Activated naive CD4-positive, alpha-beta T cell treated with anti-CD3 and anti-CD28 coated beads, Interleukin-2, amount 10 ng/mL, durations not matched to agents 7 days and 5 days (primary cell): ENCODE measurements at regions of chr13 and their contacts with region 1.

Region 1: GRCh38 chr13:102596147-102597028 is at the start of gene TPP2:
- DNase-seq: peak; percentile 99
- H3K4me3 Mint-ChIP-seq: peak within 1 kb of the TSS; percentile 97
- H3K27ac Mint-ChIP-seq: peak within 1 kb of the TSS; percentile 100
- H3K4me1 Mint-ChIP-seq: peaks cover 66% of the 10 kb centered on the region
- H3K27me3 Mint-ChIP-seq: no peaks in the 10 kb centered on the region

Region 2: DNA sequence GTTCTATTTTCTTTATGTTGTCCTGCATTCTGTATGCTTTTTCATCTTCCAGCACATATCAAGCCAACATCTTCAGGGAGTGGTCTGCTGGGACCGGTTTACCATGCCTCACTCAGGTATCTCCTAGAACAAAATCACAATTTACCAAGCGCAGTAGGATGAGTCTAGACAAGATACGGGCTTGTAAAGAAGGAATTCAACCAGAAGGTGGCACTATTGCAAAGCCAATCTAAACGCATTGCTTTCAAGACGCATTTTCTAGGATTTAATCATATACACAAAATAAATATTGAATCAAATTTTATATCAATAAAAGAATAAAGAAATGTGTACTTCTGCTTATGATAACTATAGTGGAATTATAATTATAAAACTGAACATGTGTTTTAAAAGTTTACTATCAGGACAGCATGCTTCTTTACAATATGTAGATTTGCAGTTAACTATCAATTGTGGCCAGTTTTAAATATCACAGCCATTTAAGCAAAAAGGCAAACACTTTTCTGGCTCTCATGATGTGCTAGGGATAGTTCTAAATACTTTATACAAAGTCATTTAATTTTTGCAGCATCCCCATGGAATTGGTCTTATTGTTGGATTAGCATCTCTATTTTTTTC is 15.7 kb before region 1 on chr13:
- CTCF ChIA-PET with region 1: interaction called, 11 read pairs
- DNase-seq: peak; percentile 49
- H3K4me3 Mint-ChIP-seq: no peak overlapping the region
- H3K27ac Mint-ChIP-seq: no peak overlapping the region
- H3K4me1 Mint-ChIP-seq: peaks cover 18% of the 10 kb centered on the region
- H3K27me3 Mint-ChIP-seq: peaks cover 10% of the 10 kb centered on the region

Region 3: DNA sequence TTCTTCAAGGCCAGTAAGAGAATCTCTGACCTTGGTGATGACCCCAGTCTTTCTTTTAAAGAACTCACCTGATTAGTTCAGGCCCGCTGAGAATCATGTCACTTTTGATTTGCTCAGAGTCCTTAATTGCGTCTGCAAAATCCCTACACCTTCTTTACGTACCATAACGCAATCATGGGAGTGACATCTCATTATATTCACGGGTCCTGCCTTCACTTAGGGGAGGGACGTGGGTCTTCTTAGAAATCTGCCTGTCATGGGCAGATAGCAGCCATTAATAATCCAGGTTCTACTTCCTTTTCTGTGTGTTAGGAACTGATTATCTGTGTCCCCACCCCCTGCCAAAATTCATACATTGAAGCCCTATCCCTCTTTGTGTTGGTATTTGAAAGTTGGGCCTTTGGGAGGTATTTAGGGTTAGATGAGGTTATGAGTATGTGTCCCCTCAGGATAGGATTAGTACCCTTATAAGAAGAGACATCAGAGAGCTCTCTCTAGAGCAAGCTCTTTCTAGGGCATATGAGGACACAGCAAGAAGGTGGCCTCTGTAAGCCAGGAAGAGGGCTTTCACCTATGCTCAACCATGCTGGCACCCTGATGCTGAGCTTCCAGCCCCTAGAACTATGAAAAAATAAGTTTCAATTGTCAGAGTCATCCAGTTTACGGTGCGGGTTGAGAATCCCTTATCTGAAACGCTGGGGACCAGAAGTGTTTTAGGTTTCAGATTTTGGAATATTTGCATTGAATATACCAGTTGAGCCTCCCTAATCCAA is 10.3 kb after region 1 on chr13:
- CTCF ChIA-PET with region 1: interaction called, 11 read pairs
- DNase-seq: no peak
- H3K4me3 Mint-ChIP-seq: no peak overlapping the region
- H3K27ac Mint-ChIP-seq: peak overlapping the region; percentile 43
- H3K4me1 Mint-ChIP-seq: peaks cover 66% of the 10 kb centered on the region
- H3K27me3 Mint-ChIP-seq: no peaks in the 10 kb centered on the region

Region 4: DNA sequence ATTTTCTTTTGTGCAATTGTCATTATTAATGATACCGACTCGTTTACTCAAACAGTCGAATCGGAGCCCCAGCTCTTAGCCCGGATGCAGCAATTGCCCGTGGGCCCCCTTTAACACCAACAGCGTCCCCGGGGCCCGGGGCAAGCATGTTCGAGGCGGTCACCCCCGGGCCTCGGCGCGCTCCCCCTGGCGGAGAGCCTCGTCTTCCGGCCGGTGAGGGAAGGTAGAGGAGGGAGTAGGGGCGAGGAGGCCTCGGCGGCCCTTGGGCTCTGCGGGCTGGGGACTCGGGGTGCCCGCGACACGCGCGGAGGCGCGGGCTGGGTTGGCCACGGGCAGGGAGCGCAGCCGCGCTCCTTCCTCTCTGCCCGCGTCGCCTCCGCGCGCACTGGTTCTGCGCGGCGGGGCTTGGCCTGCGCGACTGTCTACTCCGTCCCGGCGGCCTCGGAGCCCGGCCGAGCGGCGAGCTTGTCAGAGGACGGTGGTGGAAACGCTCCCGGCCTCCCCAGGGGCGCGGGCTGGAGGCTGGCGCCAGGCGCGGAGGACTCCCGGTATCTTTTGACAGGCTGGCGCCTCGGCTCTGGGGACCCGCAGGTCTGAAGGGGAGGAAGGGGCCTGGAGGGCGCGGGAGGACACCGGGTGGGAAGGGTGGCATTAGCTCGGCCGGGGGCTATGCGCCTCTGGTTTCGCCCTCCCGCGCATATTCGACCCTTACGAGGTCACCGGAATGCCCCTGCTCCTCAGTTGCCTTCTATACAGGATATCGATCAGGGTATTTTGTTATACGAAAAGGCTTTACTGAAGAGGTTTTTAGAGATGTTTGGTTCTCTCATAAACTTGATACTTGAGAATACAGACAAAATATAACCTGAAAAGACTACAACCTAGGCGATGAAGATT is 204.0 kb after region 1 on chr13:
- CTCF ChIA-PET with region 1: interaction called, 11 read pairs
- DNase-seq: peak; percentile 90
- H3K4me3 Mint-ChIP-seq: peak overlapping the region; percentile 93
- H3K27ac Mint-ChIP-seq: peak overlapping the region; percentile 82
- H3K4me1 Mint-ChIP-seq: peaks cover 47% of the 10 kb centered on the region
- H3K27me3 Mint-ChIP-seq: peaks cover 9% of the 10 kb centered on the region

Region 5: DNA sequence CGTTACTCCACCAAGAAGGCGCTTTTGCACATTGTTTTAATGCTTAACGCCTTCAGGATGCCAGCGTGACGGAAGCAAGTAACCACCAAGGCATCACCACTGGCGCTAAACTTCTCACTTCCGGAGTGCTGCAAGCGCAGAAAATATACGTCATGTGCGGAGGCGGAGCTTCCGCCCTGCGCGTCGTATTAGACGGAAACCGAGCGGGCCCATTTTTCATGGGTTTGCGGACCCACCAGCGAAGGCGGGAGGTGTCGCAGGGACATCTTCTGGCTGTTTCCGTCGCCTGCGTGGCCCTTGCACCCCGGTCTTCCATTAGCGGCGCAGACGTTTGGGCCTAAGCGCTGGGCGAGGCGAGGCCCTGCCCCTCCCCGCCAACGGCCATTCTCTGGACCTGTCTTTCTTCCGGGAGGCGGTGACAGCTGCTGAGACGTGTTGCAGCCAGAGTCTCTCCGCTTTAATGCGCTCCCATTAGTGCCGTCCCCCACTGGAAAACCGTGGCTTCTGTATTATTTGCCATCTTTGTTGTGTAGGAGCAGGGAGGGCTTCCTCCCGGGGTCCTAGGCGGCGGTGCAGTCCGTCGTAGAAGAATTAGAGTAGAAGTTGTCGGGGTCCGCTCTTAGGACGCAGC is 249.4 kb after region 1 on chr13 and contains the start of gene ERCC5:
- CTCF ChIA-PET with region 1: interaction called, 23 read pairs
- DNase-seq: peak; percentile 96
- H3K4me3 Mint-ChIP-seq: peak within 1 kb of the TSS; percentile 95
- H3K27ac Mint-ChIP-seq: peak within 1 kb of the TSS; percentile 99
- H3K4me1 Mint-ChIP-seq: peaks cover 48% of the 10 kb centered on the region
- H3K27me3 Mint-ChIP-seq: no peaks in the 10 kb centered on the region